GM12878 (cell line): ENCODE measurements at regions of chr7 and their contacts with region 1.

Region 1: DNA sequence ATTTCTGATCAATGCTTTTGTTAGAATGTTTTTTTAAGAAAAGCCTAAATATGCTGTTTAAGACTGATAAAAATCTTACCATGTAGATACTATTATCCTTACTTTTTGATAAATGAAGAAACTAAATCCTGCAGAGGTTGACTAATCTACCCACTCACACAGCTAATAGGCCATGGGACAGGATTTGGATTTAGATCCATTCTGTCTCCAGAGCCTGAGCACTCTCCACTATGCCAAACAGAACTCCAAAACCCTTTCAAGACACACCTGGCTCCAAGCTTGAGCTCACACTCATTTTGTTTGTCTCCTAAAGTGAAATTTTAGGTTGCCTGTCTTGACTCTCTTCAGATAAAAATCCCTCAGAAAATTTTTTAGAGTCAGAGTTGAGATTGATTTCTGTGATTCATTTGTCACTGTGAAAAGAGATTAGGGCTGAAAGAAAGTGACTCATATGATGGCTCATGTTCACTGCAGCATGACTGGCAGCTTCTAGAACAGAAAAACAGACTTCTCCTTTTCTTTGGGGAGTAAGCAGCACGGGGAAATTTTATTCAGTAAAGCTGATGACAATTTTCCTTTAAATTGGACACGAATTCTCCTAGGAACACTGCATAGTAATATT is 132.3 kb upstream of the POT1 start:
- DNase-seq: no peak
- ATAC-seq: peak; percentile 98
- H3K4me3 ChIP-seq: no peak overlapping the region
- H3K27ac ChIP-seq: no peak overlapping the region
- H3K4me1 ChIP-seq: no peaks in the 10 kb centered on the region
- H3K27me3 ChIP-seq: no peaks in the 10 kb centered on the region
- CTCF ChIP-seq: no peak
- EP300 ChIP-seq: no peak
- POLR2A ChIP-seq: no peak
- RAD21 ChIP-seq: no peak

Region 2: GRCh38 chr7:124959676-124960075 is 102.2 kb before region 1 on chr7:
- CTCF ChIA-PET with region 1: no interaction called
- POLR2A ChIA-PET with region 1: no interaction called
- RAD21 ChIA-PET with region 1: no interaction called
- SMC1A ChIA-PET with region 1: no interaction called
- in situ Hi-C with region 1: no loop called
- intact Hi-C with region 1: no loop called
- DNase-seq: no peak
- ATAC-seq: no peak
- H3K4me3 ChIP-seq: no peak overlapping the region
- H3K27ac ChIP-seq: no peak overlapping the region
- H3K4me1 ChIP-seq: no peaks in the 10 kb centered on the region
- H3K27me3 ChIP-seq: no peaks in the 10 kb centered on the region
- CTCF ChIP-seq: no peak
- EP300 ChIP-seq: no peak
- POLR2A ChIP-seq: no peak
- RAD21 ChIP-seq: no peak

Region 3: DNA sequence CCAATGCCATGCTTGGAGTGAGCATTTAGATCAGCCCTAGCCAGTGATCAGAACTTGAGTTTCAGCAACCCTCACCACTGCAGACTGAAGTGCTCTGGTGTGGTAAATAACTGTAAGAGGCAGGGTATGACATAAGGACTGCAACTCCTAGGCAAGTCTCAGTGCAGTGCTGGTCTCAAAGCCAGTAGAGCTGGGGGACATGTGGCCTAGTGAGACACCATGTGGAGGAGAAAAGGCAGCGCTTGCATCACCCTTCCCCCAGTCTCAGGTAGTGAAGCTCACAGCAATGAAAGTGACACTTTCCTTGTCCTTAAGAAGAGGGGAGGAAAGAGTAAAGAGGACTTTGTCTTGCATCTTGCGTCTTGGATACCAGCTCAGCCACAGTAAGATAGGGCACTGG is 254.6 kb after region 1 on chr7:
- CTCF ChIA-PET with region 1: interaction called, 5 read pairs
- POLR2A ChIA-PET with region 1: no interaction called
- RAD21 ChIA-PET with region 1: interaction called, 4 read pairs
- SMC1A ChIA-PET with region 1: no interaction called
- in situ Hi-C with region 1: no loop called
- intact Hi-C with region 1: loop called (anchors 2 kb)
- DNase-seq: no peak
- ATAC-seq: peak; percentile 92
- H3K4me3 ChIP-seq: no peak overlapping the region
- H3K27ac ChIP-seq: no peak overlapping the region
- H3K4me1 ChIP-seq: no peaks in the 10 kb centered on the region
- H3K27me3 ChIP-seq: no peaks in the 10 kb centered on the region
- CTCF ChIP-seq: peak in 1 of 3 experiments; percentile 38; a peak in 2 of 6 replicates
- EP300 ChIP-seq: no peak
- POLR2A ChIP-seq: no peak
- RAD21 ChIP-seq: peak; percentile 62

Region 4: DNA sequence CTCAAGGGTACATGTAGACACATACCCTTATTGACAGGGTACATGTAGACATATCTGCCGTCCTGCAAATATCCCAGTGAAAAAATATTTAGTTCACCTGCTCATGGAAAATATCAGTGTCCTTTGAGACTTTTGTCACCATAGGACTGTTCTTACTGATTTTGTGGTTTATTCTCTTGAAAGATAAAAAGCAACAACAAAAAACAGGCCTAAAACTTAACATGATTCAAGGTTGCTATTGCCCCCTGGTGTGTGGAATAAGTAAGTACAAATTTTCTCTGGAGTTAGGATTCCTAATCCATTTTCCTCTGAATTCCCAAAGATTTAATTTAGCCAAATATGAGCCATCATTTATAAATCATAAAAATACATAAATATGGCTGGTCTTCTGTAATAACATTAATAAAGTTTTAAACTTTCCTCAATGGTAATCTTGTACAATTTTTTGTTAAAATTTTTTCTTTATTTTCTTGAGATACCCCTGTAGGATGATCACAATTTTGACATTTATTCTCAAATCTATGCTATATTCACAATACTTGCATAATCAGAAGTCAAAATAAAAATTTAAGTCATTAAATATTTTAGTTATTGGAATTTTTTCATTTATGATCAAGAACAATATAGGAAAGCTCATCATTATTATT is 609.2 kb after region 1 on chr7:
- CTCF ChIA-PET with region 1: interaction called, 12 read pairs
- POLR2A ChIA-PET with region 1: no interaction called
- RAD21 ChIA-PET with region 1: interaction called, 11 read pairs
- SMC1A ChIA-PET with region 1: interaction called, 6 read pairs
- in situ Hi-C with region 1: loop called (anchors 5 kb)
- intact Hi-C with region 1: loop called (anchors 2 kb)
- DNase-seq: no peak
- ATAC-seq: peak; percentile 18; the same call in 1 of the 3 replicates
- H3K4me3 ChIP-seq: no peak overlapping the region
- H3K27ac ChIP-seq: no peak overlapping the region
- H3K4me1 ChIP-seq: no peaks in the 10 kb centered on the region
- H3K27me3 ChIP-seq: no peaks in the 10 kb centered on the region
- CTCF ChIP-seq: peak; percentile 50 to 54 (median 52); a peak in 5 of 6 replicates
- EP300 ChIP-seq: no peak
- POLR2A ChIP-seq: no peak
- RAD21 ChIP-seq: peak; percentile 82